AG04449 (cell line): ENCODE measurements at regions of chr11 and their contacts with region 1.

Region 1: DNA sequence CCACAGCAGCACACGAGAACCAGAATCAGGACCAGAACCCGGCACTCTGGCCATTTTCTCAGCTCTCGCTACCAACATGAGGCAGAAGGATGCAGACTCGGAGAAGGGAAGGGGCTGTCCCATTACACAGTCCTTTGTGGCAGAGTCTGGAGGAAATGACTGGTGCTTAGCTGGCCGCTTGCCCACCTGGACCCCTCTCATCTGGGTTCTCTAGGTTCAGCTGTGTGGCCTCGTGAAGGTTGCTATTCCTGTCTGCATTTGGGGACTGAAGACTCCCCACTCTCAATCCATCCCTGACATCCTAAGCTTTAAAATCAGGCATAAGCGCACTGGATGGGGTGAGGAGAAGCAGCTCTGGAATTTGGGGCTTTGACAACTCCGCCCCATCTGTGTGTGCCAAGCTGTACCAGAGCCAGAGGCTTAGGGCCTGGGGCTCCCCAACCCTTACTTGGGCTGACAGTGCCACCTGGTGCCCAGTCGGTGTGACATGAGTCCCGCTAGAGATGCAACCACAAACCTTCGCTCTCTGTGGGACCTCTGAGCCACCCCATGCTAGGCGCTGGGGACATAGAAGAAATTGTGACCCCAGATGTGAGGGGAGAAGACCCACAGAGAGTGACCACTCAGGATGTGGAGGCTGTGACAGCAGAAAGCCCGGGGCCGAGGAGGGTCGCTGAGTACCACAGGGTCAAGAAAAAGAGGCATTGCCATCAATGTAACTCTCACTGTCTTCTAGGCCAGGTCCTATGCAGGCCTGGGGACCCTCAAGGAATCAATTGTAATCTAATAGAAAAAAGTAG is 35.9 kb upstream of the FCHSD2 start:
- DNase-seq: peak; percentile 36
- H3K4me3 ChIP-seq: no peak overlapping the region
- CTCF ChIP-seq: peak; percentile 85

Region 2: GRCh38 chr11:72736452-72737069 is 441.4 kb before region 1 on chr11:
- CTCF ChIA-PET with region 1: interaction called, 12 read pairs
- POLR2A ChIA-PET with region 1: no interaction called
- DNase-seq: no peak
- H3K4me3 ChIP-seq: no peak overlapping the region
- CTCF ChIP-seq: no peak

Region 3: DNA sequence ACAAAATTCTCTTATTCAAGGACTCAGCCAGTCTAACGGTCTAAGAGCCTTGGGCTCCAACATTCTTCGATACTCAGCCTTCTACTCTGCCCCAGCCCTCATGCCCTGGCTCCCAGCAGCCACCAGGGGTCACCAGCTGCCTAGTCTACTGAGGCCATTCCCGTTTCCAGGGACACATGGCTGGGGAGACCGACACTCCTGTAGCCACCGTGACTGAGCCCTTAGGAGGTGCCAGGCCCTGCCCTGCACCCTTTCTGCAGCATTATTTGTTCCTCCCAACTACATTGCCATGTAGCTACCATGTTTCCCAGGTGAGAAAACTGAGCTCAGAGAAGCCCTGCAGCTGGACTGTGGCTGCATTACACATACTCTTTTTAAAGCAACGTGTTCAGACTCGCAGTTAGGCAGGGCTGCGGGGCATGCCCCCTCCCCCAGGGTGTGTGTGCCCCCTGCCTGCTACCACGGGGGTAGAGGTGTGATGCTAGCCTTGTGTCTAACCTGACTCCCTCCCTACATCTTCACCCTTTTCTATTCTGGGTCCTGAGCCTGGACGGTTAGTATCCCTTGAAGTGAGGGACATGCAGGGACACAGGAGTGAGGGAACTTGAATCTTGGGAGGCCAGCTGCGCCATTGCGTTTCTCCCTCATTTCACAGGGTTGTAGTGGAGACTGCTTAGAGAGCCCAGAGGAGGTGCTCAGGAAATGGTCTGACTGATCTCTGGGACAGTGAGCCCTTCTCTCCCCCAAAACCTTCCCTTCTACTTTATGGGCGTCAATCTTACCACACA is 346.3 kb before region 1 on chr11:
- CTCF ChIA-PET with region 1: interaction called, 324 read pairs
- POLR2A ChIA-PET with region 1: interaction called, 3 read pairs
- DNase-seq: no peak
- H3K4me3 ChIP-seq: no peak overlapping the region
- CTCF ChIP-seq: peak; percentile 97

Region 4: GRCh38 chr11:72924568-72925190 is 253.3 kb before region 1 on chr11:
- CTCF ChIA-PET with region 1: interaction called, 78 read pairs
- POLR2A ChIA-PET with region 1: no interaction called
- DNase-seq: no peak
- H3K4me3 ChIP-seq: no peak overlapping the region
- CTCF ChIP-seq: peak; percentile 41

Region 5: GRCh38 chr11:73157053-73158010 is 20.6 kb before region 1 on chr11:
- CTCF ChIA-PET with region 1: interaction called, 95 read pairs
- POLR2A ChIA-PET with region 1: interaction called, 3 read pairs
- DNase-seq: peak; percentile 65
- H3K4me3 ChIP-seq: peak overlapping the region; percentile 12; the same call in 1 of the 2 replicates
- CTCF ChIP-seq: no peak

Region 6: DNA sequence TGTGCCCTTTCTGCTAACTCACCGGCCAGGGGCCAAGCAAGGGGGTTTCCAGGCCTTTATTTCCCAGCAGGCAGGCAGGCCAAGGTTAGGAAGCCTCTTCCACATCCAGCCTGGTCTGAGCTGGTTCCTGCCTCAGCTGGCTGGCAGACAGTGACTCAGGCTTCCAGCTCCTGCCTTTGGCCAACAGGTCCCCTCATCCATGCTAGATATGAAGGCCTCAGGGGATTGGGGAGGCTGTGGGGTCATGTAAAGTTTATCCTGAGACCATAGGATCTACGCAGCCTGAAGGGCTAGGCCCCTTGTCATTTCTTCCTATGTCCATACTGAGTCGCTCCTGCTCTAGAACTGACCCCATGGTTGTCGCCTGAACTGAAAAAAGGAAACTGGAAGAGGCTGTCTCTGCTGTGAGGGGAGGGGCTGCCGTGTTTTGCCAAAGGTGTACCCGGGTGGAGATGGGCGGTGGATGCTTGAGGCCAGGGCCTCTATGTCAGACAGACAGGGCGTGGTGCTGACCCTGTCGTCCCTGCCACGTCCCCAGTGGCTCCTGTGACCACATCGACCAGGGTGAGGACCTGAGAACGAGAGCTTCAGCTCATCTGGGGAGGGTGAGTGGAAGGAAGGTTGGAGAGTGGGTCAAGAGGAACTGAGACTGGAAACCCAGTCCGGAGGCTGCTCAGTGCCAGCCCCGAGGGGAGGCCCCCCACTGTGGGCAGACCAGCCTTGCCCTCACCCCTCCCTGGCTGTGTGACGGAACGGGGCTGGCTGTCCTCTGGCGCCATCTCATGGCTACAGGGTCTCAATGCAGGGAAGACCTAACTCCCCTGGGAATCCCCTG is 111.1 kb after region 1 on chr11:
- CTCF ChIA-PET with region 1: interaction called, 179 read pairs
- POLR2A ChIA-PET with region 1: no interaction called
- DNase-seq: no peak
- H3K4me3 ChIP-seq: no peak overlapping the region
- CTCF ChIP-seq: peak; percentile 97

Region 7: GRCh38 chr11:73342633-73343032 is 164.7 kb after region 1 on chr11:
- CTCF ChIA-PET with region 1: no interaction called
- POLR2A ChIA-PET with region 1: no interaction called
- DNase-seq: no peak
- H3K4me3 ChIP-seq: no peak overlapping the region
- CTCF ChIP-seq: no peak